ENCODE measurements at regions of chr14 and their contacts with region 1.

Region 1: GRCh38 chr14:36520601-36521525 is 831 bp upstream of the NKX2-1 start:
- DNase-seq: peak in 1 of 2 experiments; percentile 80
- H3K4me3 ChIP-seq: peak overlapping the region in 3 of 4 experiments; percentile 11 to 47 (median 23); a peak in 4 of 8 replicates
- H3K27ac ChIP-seq: no peak overlapping the region
- H3K4me1 ChIP-seq: peaks cover 0 to 25% (median 14%) of the 10 kb centered on the region in 4 experiments; a peak in 6 of 7 replicates
- H3K27me3 ChIP-seq: peaks cover 94 to 100% (median 98%) of the 10 kb centered on the region in 4 experiments
- CTCF ChIP-seq: peak in 2 of 3 experiments; percentile 39 to 46; a peak in 3 of 4 replicates
- EP300 ChIP-seq: no peak
- POLR2A ChIP-seq: no peak
- RAD21 ChIP-seq: peak; percentile 12 to 21; a peak in 2 of 4 replicates

Region 2: DNA sequence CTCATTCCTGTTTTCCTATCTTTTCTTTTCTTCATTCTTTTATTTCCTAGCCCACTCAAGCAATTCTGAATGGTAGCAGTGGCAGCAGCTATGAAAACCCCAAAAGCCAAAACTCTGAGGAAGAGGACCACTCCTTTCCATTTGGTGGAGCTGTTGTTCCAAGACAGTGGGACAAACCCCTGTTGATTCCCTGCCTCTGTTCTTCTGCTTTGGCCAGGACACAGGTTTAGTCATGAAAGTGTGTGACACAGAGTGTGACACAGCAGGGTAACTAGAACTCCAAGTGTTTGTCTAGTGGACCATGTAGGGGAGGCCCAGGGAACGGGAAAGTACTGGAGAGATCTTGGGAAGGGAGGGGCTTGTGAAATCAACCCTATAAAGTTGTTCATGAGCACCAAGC is 415.5 kb before region 1 on chr14:
- CTCF ChIA-PET with region 1: interaction called, 39 read pairs
- POLR2A ChIA-PET with region 1: no interaction called
- DNase-seq: peak in 1 of 2 experiments; percentile 53
- H3K4me3 ChIP-seq: no peak overlapping the region
- H3K27ac ChIP-seq: no peak overlapping the region
- H3K4me1 ChIP-seq: peaks cover 0 to 2% (median 0%) of the 10 kb centered on the region in 4 experiments; a peak in 2 of 7 replicates
- H3K27me3 ChIP-seq: no peaks in the 10 kb centered on the region
- CTCF ChIP-seq: peak; percentile 39 to 81 (median 81)
- EP300 ChIP-seq: no peak
- POLR2A ChIP-seq: no peak
- RAD21 ChIP-seq: peak; percentile 96

Region 3: GRCh38 chr14:36424478-36425102 is 96.3 kb before region 1 on chr14:
- CTCF ChIA-PET with region 1: no interaction called
- POLR2A ChIA-PET with region 1: no interaction called
- DNase-seq: no peak
- H3K4me3 ChIP-seq: no peak overlapping the region
- H3K27ac ChIP-seq: no peak overlapping the region
- H3K4me1 ChIP-seq: peaks cover 0 to 6% (median 2%) of the 10 kb centered on the region in 4 experiments; a peak in 2 of 7 replicates
- H3K27me3 ChIP-seq: no peaks in the 10 kb centered on the region; a peak in 1 of 7 replicates
- CTCF ChIP-seq: no peak
- EP300 ChIP-seq: no peak
- POLR2A ChIP-seq: no peak
- RAD21 ChIP-seq: no peak

Region 4: GRCh38 chr14:36493761-36494160 is 27.1 kb before region 1 on chr14:
- CTCF ChIA-PET with region 1: interaction called, 33 read pairs
- POLR2A ChIA-PET with region 1: no interaction called
- DNase-seq: no peak
- H3K4me3 ChIP-seq: no peak overlapping the region
- H3K27ac ChIP-seq: no peak overlapping the region
- H3K4me1 ChIP-seq: no peaks in the 10 kb centered on the region; a peak in 1 of 7 replicates
- H3K27me3 ChIP-seq: peaks cover 0 to 2% (median 1%) of the 10 kb centered on the region in 4 experiments; a peak in 6 of 7 replicates
- CTCF ChIP-seq: no peak
- EP300 ChIP-seq: no peak
- POLR2A ChIP-seq: no peak
- RAD21 ChIP-seq: no peak

Region 5: DNA sequence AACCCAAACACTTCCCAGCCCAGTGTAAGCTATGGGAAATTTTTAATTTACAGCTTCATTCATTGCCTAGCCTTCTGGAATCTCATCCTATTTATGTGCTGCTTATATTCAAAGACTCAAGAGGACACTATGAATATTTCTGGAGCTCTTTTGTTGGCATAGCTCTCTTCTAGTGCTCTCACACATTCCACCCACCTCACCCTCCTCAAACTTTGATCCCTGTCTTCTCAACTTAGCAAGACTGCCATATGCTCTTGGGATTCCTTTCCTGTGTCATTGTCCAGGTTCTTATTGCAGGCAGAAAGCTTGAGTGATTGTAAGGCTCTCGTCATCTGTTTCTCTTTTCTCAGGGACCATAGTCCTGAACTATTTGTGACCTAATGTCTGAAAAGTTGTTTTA is 17.2 kb after region 1 on chr14:
- CTCF ChIA-PET with region 1: interaction called, 76 read pairs
- POLR2A ChIA-PET with region 1: no interaction called
- DNase-seq: no peak
- H3K4me3 ChIP-seq: no peak overlapping the region
- H3K27ac ChIP-seq: no peak overlapping the region
- H3K4me1 ChIP-seq: no peaks in the 10 kb centered on the region
- H3K27me3 ChIP-seq: peaks cover 0 to 2% (median 0%) of the 10 kb centered on the region in 4 experiments; a peak in 1 of 7 replicates
- CTCF ChIP-seq: no peak
- EP300 ChIP-seq: no peak
- POLR2A ChIP-seq: no peak
- RAD21 ChIP-seq: no peak

Region 6: DNA sequence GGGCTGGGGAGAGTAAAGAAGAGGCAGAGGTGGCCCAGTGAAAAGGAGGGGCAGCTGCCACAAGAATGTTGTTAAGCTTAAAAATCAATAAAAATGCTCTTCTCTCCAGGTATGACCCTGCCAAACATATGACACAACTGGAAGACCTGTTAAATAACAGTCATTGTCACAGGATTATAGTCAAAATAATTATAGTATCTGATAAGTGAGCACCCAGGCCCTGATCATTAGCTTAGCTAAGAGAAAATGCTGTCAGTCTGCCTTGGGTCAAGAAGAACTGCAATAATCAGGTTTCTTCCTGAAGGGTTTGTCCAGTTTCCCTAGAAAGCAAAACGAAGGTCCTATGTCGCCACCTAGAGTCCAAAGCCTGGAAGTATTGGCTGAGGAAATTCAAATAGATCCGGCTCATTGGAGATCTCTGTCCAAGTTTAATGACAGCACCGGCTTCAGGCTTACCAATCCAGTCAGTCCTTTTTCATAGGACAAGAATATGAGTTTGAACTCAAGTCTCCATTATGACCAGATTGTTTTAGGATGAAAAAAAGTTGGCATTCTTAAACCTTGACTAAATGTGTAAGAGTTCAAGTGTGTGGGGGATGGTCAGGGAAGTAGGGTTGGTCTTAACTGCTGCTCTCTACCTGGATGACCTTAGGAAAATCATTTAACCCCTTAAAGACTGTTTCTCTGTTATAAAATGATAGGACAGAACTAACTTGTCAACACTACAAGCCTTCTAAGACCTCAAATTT is 84.1 kb after region 1 on chr14:
- CTCF ChIA-PET with region 1: interaction called, 395 read pairs
- POLR2A ChIA-PET with region 1: interaction called, 3 read pairs
- DNase-seq: peak in 1 of 2 experiments; percentile 70
- H3K4me3 ChIP-seq: peak overlapping the region in 1 of 4 experiments; percentile 40; a peak in 2 of 8 replicates
- H3K27ac ChIP-seq: no peak overlapping the region
- H3K4me1 ChIP-seq: peaks cover 2 to 12% (median 8%) of the 10 kb centered on the region in 4 experiments; a peak in 5 of 7 replicates
- H3K27me3 ChIP-seq: no peaks in the 10 kb centered on the region
- CTCF ChIP-seq: peak in 2 of 3 experiments; percentile 78 to 88; a peak in 3 of 4 replicates
- EP300 ChIP-seq: no peak
- POLR2A ChIP-seq: no peak
- RAD21 ChIP-seq: peak; percentile 90 to 93

Region 7: GRCh38 chr14:36647824-36648753 is 127.2 kb after region 1 on chr14:
- CTCF ChIA-PET with region 1: interaction called, 71 read pairs
- POLR2A ChIA-PET with region 1: interaction called, 3 read pairs
- DNase-seq: peak in 1 of 2 experiments; percentile 80
- H3K4me3 ChIP-seq: peak overlapping the region; percentile 19 to 64 (median 57); a peak in 7 of 8 replicates
- H3K27ac ChIP-seq: no peak overlapping the region
- H3K4me1 ChIP-seq: peaks cover 0 to 15% (median 7%) of the 10 kb centered on the region in 4 experiments; a peak in 6 of 7 replicates
- H3K27me3 ChIP-seq: peaks cover 73 to 85% (median 82%) of the 10 kb centered on the region in 4 experiments
- CTCF ChIP-seq: peak; percentile 63 to 67 (median 64)
- EP300 ChIP-seq: no peak
- POLR2A ChIP-seq: no peak
- RAD21 ChIP-seq: peak; percentile 75 to 77